Activated CD4-positive, alpha-beta T cell treated with anti-CD3 and anti-CD28 coated beads for 36 hours (primary cell): ENCODE measurements at regions of chr2 and their contacts with region 1.

Region 1: GRCh38 chr2:86686905-86687304 is 33.2 kb upstream of the RMND5A start:
- DNase-seq: no peak
- ATAC-seq: no peak
- H3K4me3 Mint-ChIP-seq: no peak overlapping the region
- H3K27ac Mint-ChIP-seq: no peak overlapping the region
- H3K4me1 Mint-ChIP-seq: no peaks in the 10 kb centered on the region
- H3K27me3 Mint-ChIP-seq: peaks cover 3% of the 10 kb centered on the region

Region 2: GRCh38 chr2:86314125-86314524 is 372.8 kb before region 1 on chr2:
- CTCF ChIA-PET with region 1: no interaction called
- POLR2A ChIA-PET with region 1: no interaction called
- intact Hi-C with region 1: no loop called
- DNase-seq: no peak
- ATAC-seq: no peak
- H3K4me3 Mint-ChIP-seq: no peak overlapping the region
- H3K27ac Mint-ChIP-seq: no peak overlapping the region
- H3K4me1 Mint-ChIP-seq: no peaks in the 10 kb centered on the region
- H3K27me3 Mint-ChIP-seq: no peaks in the 10 kb centered on the region

Region 3: GRCh38 chr2:86650188-86650587 is 36.7 kb before region 1 on chr2:
- CTCF ChIA-PET with region 1: no interaction called
- POLR2A ChIA-PET with region 1: no interaction called
- intact Hi-C with region 1: loop called in 1 of 2 experiments (anchors 5 kb)
- DNase-seq: no peak
- ATAC-seq: no peak
- H3K4me3 Mint-ChIP-seq: no peak overlapping the region
- H3K27ac Mint-ChIP-seq: no peak overlapping the region
- H3K4me1 Mint-ChIP-seq: no peaks in the 10 kb centered on the region
- H3K27me3 Mint-ChIP-seq: peaks cover 5% of the 10 kb centered on the region